Mammary epithelial cell (primary cell): ENCODE measurements at regions of chr4 and their contacts with region 1.

Region 1: GRCh38 chr4:30714408-30715027 is 5.7 kb upstream of the PCDH7 start:
- DNase-seq: peak; percentile 38
- H3K4me3 ChIP-seq: no peak overlapping the region
- H3K27ac ChIP-seq: no peak overlapping the region
- H3K4me1 ChIP-seq: peaks cover 11% of the 10 kb centered on the region
- H3K27me3 ChIP-seq: no peaks in the 10 kb centered on the region
- CTCF ChIP-seq: peak; percentile 82 to 87

Region 2: GRCh38 chr4:30245140-30245539 is 469.4 kb before region 1 on chr4:
- CTCF ChIA-PET with region 1: no interaction called
- dilution Hi-C with region 1: no loop called
- in situ Hi-C with region 1: no loop called
- intact Hi-C with region 1: no loop called
- DNase-seq: no peak
- H3K4me3 ChIP-seq: no peak overlapping the region
- H3K27ac ChIP-seq: no peak overlapping the region
- H3K4me1 ChIP-seq: no peaks in the 10 kb centered on the region
- H3K27me3 ChIP-seq: no peaks in the 10 kb centered on the region
- CTCF ChIP-seq: no peak

Region 3: GRCh38 chr4:30434656-30435055 is 279.9 kb before region 1 on chr4:
- CTCF ChIA-PET with region 1: no interaction called
- dilution Hi-C with region 1: no loop called
- in situ Hi-C with region 1: no loop called
- intact Hi-C with region 1: no loop called
- DNase-seq: no peak
- H3K4me3 ChIP-seq: no peak overlapping the region
- H3K27ac ChIP-seq: no peak overlapping the region
- H3K4me1 ChIP-seq: no peaks in the 10 kb centered on the region
- H3K27me3 ChIP-seq: no peaks in the 10 kb centered on the region
- CTCF ChIP-seq: no peak

Region 4: GRCh38 chr4:31059753-31060522 is 345.4 kb after region 1 on chr4:
- CTCF ChIA-PET with region 1: no interaction called
- dilution Hi-C with region 1: no loop called
- in situ Hi-C with region 1: loop called in 1 of 2 experiments (anchors 25 kb)
- intact Hi-C with region 1: no loop called
- DNase-seq: no peak
- H3K4me3 ChIP-seq: no peak overlapping the region
- H3K27ac ChIP-seq: no peak overlapping the region
- H3K4me1 ChIP-seq: no peaks in the 10 kb centered on the region
- H3K27me3 ChIP-seq: no peaks in the 10 kb centered on the region
- CTCF ChIP-seq: no peak

Region 5: GRCh38 chr4:31307029-31307428 is 592.5 kb after region 1 on chr4:
- CTCF ChIA-PET with region 1: no interaction called
- dilution Hi-C with region 1: no loop called
- in situ Hi-C with region 1: no loop called
- intact Hi-C with region 1: loop called (anchors 10 kb)
- DNase-seq: no peak
- H3K4me3 ChIP-seq: no peak overlapping the region
- H3K27ac ChIP-seq: no peak overlapping the region
- H3K4me1 ChIP-seq: no peaks in the 10 kb centered on the region
- H3K27me3 ChIP-seq: no peaks in the 10 kb centered on the region
- CTCF ChIP-seq: no peak

Region 6: GRCh38 chr4:31674313-31674947 is 959.9 kb after region 1 on chr4:
- CTCF ChIA-PET with region 1: no interaction called
- dilution Hi-C with region 1: no loop called
- in situ Hi-C with region 1: loop called (anchors 10 to 25 kb)
- intact Hi-C with region 1: loop called (anchors 1 kb)
- DNase-seq: no peak
- H3K4me3 ChIP-seq: no peak overlapping the region
- H3K27ac ChIP-seq: no peak overlapping the region
- H3K4me1 ChIP-seq: no peaks in the 10 kb centered on the region
- H3K27me3 ChIP-seq: no peaks in the 10 kb centered on the region
- CTCF ChIP-seq: peak; percentile 39 to 73